ENCODE measurements at regions of chr15 and their contacts with region 1.

Region 1: DNA sequence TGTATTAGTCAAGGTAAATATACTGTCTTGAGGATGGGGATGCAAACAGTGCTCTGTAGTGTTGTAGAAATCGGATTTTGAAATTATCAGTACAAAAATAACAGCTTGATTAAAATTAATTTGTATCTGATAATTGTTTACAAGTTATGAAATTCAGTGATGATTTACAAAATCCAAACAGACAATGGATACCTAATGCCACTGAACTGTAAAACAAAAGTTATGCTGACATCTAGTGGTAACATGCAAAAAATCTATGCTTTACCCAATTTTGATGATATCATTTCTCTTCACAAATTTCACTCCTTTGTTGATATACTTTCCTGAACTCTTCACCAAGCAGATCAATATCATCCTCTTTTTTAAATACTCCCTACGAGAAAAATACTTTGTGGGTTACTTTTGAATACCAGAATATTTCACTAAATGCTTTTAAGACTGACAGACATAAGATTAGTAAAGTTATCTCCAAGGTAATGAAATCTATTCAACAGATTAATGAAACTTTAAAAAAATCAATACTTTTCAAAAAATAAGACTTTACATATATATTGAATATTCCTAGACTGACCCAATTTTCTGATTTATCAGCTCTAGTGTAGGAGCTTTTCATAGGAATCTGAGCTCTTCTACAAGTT is 36.0 kb downstream of the MNS1 start:
- DNase-seq: peak; percentile 32
- ATAC-seq: peak; percentile 47; the same call in 1 of the 3 replicates
- H3K4me3 ChIP-seq: no peak overlapping the region
- H3K27ac ChIP-seq: no peak overlapping the region
- H3K4me1 ChIP-seq: no peaks in the 10 kb centered on the region
- H3K27me3 ChIP-seq: no peaks in the 10 kb centered on the region
- CTCF ChIP-seq: peak; percentile 67
- EP300 ChIP-seq: no peak
- POLR2A ChIP-seq: no peak
- RAD21 ChIP-seq: 0 out of 2 replicates have a peak, but pooled peaks have one; percentile 42

Region 2: GRCh38 chr15:56245871-56246814 is 182.8 kb before region 1 on chr15:
- CTCF ChIA-PET with region 1: interaction called, 57 read pairs
- POLR2A ChIA-PET with region 1: no interaction called
- in situ Hi-C with region 1: loop called (anchors 5 kb)
- intact Hi-C with region 1: loop called (anchors 1 kb)
- DNase-seq: peak; percentile 82
- ATAC-seq: peak; percentile 69
- H3K4me3 ChIP-seq: peak overlapping the region; percentile 77 to 84 (median 77)
- H3K27ac ChIP-seq: peak overlapping the region; percentile 98
- H3K4me1 ChIP-seq: peaks cover 17% of the 10 kb centered on the region
- H3K27me3 ChIP-seq: no peaks in the 10 kb centered on the region; a peak in 1 of 5 replicates
- CTCF ChIP-seq: peak; percentile 98
- EP300 ChIP-seq: peak in 1 of 2 experiments; percentile 31; a peak in 1 of 4 replicates
- POLR2A ChIP-seq: peak; percentile 41 to 42; a peak in 2 of 4 replicates
- RAD21 ChIP-seq: peak; percentile 89